Head of caudate nucleus (tissue), 42 donors: ENCODE measurements at regions of chr10 and their contacts with region 1.

Region 1: DNA sequence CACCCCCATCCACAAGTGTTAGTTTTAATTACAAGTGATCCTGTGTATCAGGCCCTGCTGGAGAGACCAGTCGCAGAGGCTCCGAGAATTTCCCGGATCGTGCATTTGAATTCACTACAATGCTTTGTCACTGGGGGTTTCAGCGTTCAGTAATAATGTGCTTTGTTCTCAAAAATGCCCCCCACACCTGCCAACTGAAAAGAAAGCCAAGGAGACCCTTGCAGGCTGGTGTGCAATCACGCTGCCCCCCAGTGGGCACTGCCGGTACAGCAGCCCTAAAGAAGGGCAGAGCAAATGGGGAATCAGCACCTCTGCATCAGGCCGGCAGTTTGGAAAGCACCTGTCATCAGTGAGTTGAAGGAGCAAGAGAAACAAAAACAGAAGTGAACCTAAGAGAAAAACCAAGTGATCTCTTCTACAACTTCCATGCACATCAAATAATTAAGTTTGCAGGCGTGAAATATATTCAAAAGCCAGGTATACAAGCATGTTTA is 177.6 kb downstream of the PARD3 start:
- DNase-seq: peak in 41 of 42 donors; percentile 43 to 90 (median 79)

Region 2: GRCh38 chr10:33330543-33331378 is 1306.7 kb before region 1 on chr10:
- intact Hi-C with region 1: loop called (anchors 5 kb)
- DNase-seq: peak; percentile 52 to 95 (median 88)

Region 3: GRCh38 chr10:34522546-34522945 is 114.9 kb before region 1 on chr10:
- intact Hi-C with region 1: loop called (anchors 10 kb)
- DNase-seq: peak in 7 of 42 donors; percentile 8 to 57 (median 41)

Region 4: DNA sequence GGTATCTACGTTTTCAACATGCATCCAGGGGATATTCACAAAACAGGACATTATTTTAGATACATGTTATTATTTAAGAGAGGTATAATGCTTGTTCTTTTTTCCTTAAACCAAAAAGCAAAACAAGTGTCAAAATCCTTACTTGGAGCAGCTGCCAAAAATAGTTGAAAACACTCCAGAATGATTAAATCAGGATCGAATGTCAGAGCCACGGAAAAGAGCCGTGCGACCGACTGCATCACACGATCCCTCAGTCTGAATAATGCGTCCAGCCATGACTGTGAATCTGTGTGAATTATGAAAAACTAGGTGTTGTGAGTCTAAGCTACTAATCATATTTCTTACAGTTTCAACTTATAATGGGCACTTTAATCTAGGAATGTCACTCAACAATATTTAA is 51.6 kb after region 1 on chr10:
- intact Hi-C with region 1: no loop called
- DNase-seq: peak in 1 of 42 donors; percentile 17